Left ventricle myocardium inferior (tissue), 1 donor: ENCODE measurements at regions of chr17 and their contacts with region 1.

Region 1: GRCh38 chr17:38351412-38352222 is at the start of gene SOCS7:
- DNase-seq: peak; percentile 95
- H3K4me3 ChIP-seq: peak within 1 kb of the TSS; percentile 92
- H3K27ac ChIP-seq: peak within 1 kb of the TSS; percentile 88
- H3K4me1 ChIP-seq: peaks cover 53% of the 10 kb centered on the region
- H3K27me3 ChIP-seq: no peaks in the 10 kb centered on the region
- CTCF ChIP-seq: peak; percentile 8
- total RNA-seq, gene SOCS7: 13.2 TPM

Region 2: DNA sequence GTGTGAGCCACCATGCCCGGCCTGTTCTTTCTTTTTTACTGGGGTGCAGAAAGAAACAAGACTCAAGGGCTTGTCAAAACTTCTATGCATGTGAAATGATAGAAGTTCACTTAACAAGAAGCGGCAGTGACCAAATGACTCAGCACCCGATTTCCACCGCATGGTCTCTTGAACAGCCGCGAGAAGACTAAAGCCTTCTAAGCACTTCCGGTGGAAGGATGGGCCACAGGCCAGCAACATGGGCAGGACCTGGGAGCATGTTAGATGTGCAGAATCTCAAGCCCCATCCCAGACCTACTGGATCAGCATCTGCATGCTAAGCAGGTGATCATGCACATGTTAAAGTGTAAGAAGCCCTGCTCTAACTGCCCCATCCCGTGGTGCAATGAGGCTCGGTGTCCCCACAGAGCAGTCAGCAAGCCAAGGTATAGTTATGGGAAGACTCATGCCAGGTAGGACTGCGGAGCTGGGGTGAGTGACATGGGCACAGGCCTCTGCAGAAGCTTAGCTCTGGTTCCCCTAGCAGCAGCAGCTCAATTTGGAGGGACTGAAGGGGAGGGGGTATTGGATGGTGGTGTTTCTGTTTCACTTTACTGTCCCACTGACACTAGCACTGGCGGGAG is 518.3 kb before region 1 on chr17:
- intact Hi-C with region 1: no loop called
- DNase-seq: no peak
- H3K4me3 ChIP-seq: no peak overlapping the region
- H3K27ac ChIP-seq: no peak overlapping the region
- H3K4me1 ChIP-seq: no peaks in the 10 kb centered on the region
- H3K27me3 ChIP-seq: peaks cover 50% of the 10 kb centered on the region
- CTCF ChIP-seq: no peak

Region 3: GRCh38 chr17:38403491-38403890 is 51.9 kb after region 1 on chr17:
- intact Hi-C with region 1: loop called (anchors 5 kb)
- DNase-seq: no peak
- H3K4me3 ChIP-seq: no peak overlapping the region
- H3K27ac ChIP-seq: no peak overlapping the region
- H3K4me1 ChIP-seq: no peaks in the 10 kb centered on the region
- H3K27me3 ChIP-seq: no peaks in the 10 kb centered on the region
- CTCF ChIP-seq: no peak

Region 4: DNA sequence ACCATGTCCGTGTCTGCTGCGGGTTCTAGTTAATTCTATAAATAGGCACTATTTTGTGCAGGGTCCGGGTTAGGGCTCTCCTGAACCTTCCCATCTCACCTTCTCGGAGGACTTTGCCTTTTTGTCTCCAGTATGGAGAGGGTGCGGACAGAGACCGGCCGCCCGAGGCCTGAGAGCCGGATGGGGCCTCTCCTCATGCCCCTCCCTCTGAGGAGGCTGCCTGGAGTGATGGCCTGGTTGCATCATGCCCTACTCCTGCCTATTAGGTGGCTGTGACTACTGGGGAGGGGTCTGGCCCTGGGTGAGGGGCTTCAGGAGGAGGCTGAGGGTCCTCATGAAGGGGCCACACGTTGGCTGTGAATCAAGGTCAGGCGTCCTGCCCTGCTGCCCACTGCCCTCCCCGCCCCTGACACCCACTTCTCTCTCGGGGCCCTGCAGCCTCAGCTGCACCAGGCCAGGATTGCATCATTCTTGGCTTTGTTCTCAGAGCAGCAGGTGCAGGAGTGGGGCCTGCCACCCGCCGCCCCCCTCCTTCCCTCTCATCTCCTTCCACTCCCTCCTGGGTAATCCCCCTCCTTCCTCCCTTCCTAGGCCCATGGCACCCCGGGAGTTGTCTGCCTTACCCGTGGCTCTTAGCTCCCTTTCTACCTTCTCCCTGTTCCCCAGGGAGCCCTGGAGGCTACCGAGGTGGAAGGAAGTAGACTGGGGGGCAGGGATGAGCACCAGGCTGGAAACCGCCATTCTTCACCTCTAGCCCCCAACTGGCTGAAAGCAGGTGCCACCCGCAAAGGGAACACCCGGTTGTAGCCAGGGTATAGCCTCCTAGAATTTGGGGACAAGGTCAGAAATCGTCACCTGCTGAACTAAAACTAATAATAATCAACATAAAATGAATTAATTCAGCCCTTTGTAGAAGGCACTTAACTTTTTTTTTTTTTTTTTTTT is 63.9 kb after region 1 on chr17:
- intact Hi-C with region 1: loop called (anchors 2 kb)
- DNase-seq: no peak
- H3K4me3 ChIP-seq: peak overlapping the region; percentile 14
- H3K27ac ChIP-seq: no peak overlapping the region
- H3K4me1 ChIP-seq: peaks cover 36% of the 10 kb centered on the region
- H3K27me3 ChIP-seq: peaks cover 53% of the 10 kb centered on the region
- CTCF ChIP-seq: no peak